Heart right ventricle (tissue), 16 donors: ENCODE measurements at regions of chr11 and their contacts with region 1.

Region 1: GRCh38 chr11:113705871-113706655 is at the start of gene TMPRSS5:
- DNase-seq: no peak
- ATAC-seq: peak in 2 of 8 donors; percentile 25 to 27
- H3K4me3 ChIP-seq: no peak within 1 kb of the TSS
- H3K27ac ChIP-seq: no peak within 1 kb of the TSS
- H3K4me1 ChIP-seq: no peaks in the 10 kb centered on the region
- H3K27me3 ChIP-seq: no peaks in the 10 kb centered on the region
- CTCF ChIP-seq: no peak
- total RNA-seq, gene TMPRSS5: 0.39 to 1.9 (median 0.48) TPM

Region 2: GRCh38 chr11:113546757-113547507 is 159.1 kb before region 1 on chr11:
- intact Hi-C with region 1: loop called in 1 of 10 experiments (anchors 10 kb)
- DNase-seq: no peak
- ATAC-seq: no peak
- H3K4me3 ChIP-seq: no peak overlapping the region
- H3K27ac ChIP-seq: no peak overlapping the region
- H3K4me1 ChIP-seq: no peaks in the 10 kb centered on the region
- H3K27me3 ChIP-seq: peaks cover 0 to 21% (median 6%) of the 10 kb centered on the region in 7 donors
- CTCF ChIP-seq: no peak

Region 3: DNA sequence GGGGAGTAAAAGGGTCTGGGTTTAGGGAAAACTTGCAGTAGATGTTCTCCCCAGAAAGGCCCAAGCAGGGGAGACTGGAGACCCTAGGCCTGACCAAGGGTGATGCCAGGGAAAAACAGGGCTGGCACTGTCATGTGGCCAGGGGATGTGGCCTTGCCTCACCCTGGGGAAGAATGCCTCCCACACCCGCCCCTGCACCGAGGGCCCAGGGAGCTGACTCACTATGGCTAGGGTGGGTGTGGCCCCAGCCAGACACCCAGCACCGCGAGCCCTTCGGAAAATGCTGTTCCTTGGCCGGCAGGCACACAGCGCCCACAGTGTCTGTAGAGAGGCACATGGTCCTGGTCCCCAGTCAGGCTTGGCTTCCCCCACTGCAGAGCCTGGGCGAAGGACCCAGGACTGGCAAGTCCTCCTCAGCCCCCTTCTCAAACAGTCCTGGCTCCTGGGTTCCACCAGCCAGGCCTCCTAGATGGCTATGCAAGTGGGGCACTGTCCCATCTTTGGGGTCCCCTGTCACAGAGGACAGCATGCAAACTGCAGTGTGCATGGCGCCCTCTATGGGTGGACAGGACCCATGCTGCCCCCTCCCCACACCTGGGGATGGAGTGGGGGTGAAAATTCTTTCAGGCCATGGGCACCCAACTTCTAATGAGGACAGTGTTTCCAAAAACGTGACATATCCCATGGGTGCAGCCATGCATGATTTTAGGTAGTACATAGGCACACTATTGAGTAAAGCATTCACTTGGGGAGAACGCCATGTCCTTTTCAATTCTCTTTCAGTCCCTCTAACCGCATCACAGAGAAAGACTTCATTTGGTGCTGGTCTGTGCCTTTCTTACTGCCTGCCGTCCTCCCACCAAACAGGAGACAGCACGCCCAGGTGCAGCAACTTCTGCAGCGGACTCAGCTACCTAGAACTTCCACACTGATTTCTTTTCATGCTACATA is 15.2 kb before region 1 on chr11:
- intact Hi-C with region 1: no loop called
- DNase-seq: no peak
- ATAC-seq: peak in 6 of 8 donors; percentile 46 to 87 (median 64)
- H3K4me3 ChIP-seq: no peak overlapping the region
- H3K27ac ChIP-seq: no peak overlapping the region
- H3K4me1 ChIP-seq: no peaks in the 10 kb centered on the region
- H3K27me3 ChIP-seq: no peaks in the 10 kb centered on the region
- CTCF ChIP-seq: peak in 7 of 9 donors; percentile 29 to 52 (median 42)